ENCODE measurements at regions of chr6 and their contacts with region 1.

Region 1: GRCh38 chr6:15248451-15249370 is 2.8 kb downstream of the JARID2 start:
- DNase-seq: peak; percentile 92
- ATAC-seq: peak; percentile 46
- H3K4me3 Mint-ChIP-seq: peak overlapping the region; percentile 95
- H3K27ac Mint-ChIP-seq: peak overlapping the region; percentile 100
- H3K4me1 Mint-ChIP-seq: peaks cover 47% of the 10 kb centered on the region
- H3K27me3 Mint-ChIP-seq: no peaks in the 10 kb centered on the region

Region 2: DNA sequence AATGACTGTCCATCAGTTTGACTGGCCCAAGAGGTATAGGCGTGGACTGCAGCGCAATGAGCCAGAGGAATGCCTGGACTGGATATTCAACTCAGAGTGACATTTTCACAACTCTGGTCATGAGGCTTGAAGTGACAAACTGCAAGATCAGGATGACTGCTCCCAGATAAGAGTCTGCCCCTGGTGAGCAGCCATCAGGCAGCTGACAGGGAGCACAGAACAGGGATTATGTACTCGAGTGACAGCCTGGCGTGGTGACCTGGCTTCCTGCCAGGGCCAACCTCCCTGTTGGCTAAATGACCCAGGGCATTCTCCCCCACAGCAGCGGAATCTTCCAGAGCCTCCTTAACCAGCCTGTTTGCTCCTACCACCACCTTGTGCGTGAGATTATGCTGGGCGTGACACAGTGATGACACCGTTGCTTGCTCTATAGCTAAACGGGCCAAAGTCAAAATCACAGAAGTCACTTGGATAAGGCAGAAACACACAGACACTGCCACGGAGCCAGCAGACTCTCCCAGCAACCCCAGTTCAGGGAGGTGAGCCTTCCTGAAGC is 211.9 kb before region 1 on chr6:
- POLR2A ChIA-PET with region 1: no interaction called
- DNase-seq: no peak
- ATAC-seq: no peak
- H3K4me3 Mint-ChIP-seq: no peak overlapping the region
- H3K27ac Mint-ChIP-seq: no peak overlapping the region
- H3K4me1 Mint-ChIP-seq: peaks cover 3% of the 10 kb centered on the region
- H3K27me3 Mint-ChIP-seq: peaks cover 2% of the 10 kb centered on the region

Region 3: GRCh38 chr6:15090145-15090579 is 158.5 kb before region 1 on chr6:
- POLR2A ChIA-PET with region 1: no interaction called
- DNase-seq: no peak
- ATAC-seq: no peak
- H3K4me3 Mint-ChIP-seq: no peak overlapping the region
- H3K27ac Mint-ChIP-seq: no peak overlapping the region
- H3K4me1 Mint-ChIP-seq: no peaks in the 10 kb centered on the region
- H3K27me3 Mint-ChIP-seq: no peaks in the 10 kb centered on the region

Region 4: DNA sequence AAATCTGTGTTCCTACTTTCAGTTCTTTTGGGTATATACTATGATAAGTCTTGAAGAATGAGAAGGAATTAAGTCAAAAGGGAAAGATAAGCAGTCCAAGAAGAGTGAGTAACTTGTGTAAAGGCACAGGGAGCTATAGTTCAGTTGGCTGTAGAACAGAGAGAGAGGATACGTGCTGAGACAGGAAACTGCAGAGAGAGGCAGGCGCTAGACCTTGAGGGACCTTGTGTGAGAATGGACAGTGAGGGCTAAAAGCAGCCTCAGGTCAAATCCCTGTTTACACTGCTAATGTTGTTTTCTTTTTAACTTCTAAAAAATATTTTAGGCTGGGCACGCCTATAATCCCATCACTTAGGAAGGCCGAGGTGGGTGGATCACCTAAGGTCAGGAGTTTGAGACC is 69.4 kb before region 1 on chr6:
- POLR2A ChIA-PET with region 1: no interaction called
- DNase-seq: no peak
- ATAC-seq: no peak
- H3K4me3 Mint-ChIP-seq: no peak overlapping the region
- H3K27ac Mint-ChIP-seq: no peak overlapping the region
- H3K4me1 Mint-ChIP-seq: no peaks in the 10 kb centered on the region
- H3K27me3 Mint-ChIP-seq: no peaks in the 10 kb centered on the region

Region 5: DNA sequence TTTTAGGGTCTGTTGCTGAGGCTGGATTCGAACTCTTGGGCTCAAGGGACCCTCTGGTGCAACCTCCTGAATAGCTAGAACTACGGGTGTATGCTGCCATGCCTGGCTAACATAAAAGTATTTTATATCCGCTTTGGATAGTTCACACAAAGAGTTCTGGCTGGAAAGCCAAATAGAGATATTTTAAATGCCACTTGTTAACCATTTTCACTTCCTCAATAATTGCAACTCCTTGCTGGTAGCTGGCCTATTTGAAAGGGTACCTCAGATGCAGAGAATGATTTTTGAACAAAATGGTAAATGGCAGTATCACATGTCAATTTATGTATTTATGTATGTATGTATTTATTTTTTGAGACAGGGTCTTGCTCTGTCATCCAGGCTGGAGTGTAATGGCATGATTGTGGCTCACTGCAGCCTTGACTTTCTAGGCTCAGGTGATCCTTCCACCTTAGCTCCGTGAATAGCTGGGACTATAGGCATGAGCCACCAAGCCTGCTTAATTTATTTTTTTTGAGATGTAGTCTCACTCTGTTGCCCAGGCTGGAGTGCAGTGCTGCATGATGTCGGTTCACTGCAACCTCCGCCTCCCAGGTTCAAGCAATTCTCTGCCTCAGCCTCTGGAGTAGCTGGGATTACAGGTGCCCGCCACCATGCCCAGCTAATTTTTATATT is 15.7 kb before region 1 on chr6:
- POLR2A ChIA-PET with region 1: no interaction called
- DNase-seq: no peak
- ATAC-seq: no peak
- H3K4me3 Mint-ChIP-seq: no peak overlapping the region
- H3K27ac Mint-ChIP-seq: no peak overlapping the region
- H3K4me1 Mint-ChIP-seq: no peaks in the 10 kb centered on the region
- H3K27me3 Mint-ChIP-seq: peaks cover 4% of the 10 kb centered on the region

Region 6: DNA sequence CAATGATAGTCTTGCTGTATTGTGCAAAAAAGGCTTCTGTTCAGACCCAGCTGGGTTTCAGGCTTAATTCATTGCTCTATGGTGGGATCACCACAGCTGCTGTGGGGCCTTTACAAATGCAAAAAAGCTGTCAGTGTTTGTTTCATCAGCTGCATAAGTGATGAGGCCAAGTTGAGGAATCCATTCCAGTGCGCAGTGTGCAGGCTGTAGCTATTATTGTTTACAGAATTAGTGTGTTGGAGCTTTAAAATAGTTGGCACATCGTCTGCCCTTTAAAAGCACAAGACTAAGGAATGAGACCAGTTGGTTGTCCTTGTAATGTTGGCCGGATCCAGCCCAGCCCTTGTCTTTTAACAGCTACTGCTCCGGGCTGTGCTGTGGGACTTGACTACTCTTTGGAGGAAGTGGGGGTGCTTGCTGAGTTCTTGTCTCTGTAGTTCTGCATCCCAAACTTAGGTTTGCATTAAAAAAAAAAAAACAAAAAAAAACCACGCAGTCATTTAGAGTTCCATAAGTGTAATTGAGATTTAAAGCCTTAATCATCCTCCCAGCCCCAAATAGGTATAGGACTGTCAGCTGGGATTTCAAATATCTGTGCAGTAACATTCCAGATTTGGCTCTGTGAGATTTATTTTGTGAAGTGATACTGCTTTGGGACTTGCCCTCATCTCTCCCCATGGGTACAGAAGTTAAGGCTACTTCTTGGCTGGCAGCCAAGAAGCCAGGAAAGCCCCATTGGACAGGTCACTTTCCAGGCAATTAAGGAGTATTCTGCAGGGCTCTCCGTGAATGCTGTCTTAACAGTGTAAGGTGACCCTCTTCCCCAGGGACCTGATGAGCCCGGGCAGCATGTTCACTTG is 16.4 kb after region 1 on chr6:
- POLR2A ChIA-PET with region 1: interaction called, 17 read pairs
- DNase-seq: no peak
- ATAC-seq: peak; percentile 25
- H3K4me3 Mint-ChIP-seq: peak overlapping the region; percentile 51
- H3K27ac Mint-ChIP-seq: peak overlapping the region; percentile 45
- H3K4me1 Mint-ChIP-seq: peaks cover 78% of the 10 kb centered on the region
- H3K27me3 Mint-ChIP-seq: no peaks in the 10 kb centered on the region

Region 7: GRCh38 chr6:15287670-15288375 is 39.1 kb after region 1 on chr6:
- POLR2A ChIA-PET with region 1: interaction called, 15 read pairs
- DNase-seq: no peak
- ATAC-seq: no peak
- H3K4me3 Mint-ChIP-seq: no peak overlapping the region
- H3K27ac Mint-ChIP-seq: peak overlapping the region; percentile 32
- H3K4me1 Mint-ChIP-seq: peaks cover 42% of the 10 kb centered on the region
- H3K27me3 Mint-ChIP-seq: no peaks in the 10 kb centered on the region

Region 8: DNA sequence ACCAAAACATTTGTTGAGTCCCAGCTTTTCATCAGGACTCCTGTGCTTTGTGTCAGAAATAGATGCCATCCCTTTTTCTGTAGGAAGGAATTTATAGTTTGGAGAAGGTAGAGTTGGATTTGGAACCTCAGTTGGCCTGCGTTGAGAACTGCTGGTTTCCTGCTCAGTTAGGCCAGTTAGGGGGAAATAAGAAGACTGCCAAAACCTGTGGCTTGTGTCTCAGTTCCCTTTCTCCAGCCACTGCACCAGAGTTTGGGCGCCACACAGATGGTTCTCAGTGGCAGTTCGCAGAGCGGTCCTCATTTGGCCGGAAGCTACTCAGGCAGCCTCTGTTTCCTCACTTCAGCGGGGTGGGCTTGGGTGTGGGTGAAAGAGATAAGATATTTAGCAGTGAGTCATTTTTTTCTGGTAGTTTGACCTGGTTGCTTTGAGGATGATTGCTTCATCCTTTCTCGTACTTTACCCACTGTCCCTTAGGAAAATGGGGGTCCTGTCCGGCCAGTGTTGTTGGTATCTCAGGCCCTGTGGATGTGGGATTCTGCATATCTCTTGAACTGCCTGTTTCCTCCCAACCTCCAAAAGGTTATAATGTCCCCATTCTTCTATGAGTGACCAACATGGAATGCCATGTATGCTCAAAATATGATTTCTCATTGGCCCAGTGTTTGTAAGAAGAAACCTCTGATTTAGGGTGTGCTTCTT is 50.9 kb after region 1 on chr6:
- POLR2A ChIA-PET with region 1: interaction called, 26 read pairs
- DNase-seq: peak; percentile 66
- ATAC-seq: peak; percentile 72
- H3K4me3 Mint-ChIP-seq: peak overlapping the region; percentile 63
- H3K27ac Mint-ChIP-seq: peak overlapping the region; percentile 91
- H3K4me1 Mint-ChIP-seq: peaks cover 69% of the 10 kb centered on the region
- H3K27me3 Mint-ChIP-seq: no peaks in the 10 kb centered on the region